Calu3 (cell line): ENCODE measurements at regions of chr6 and their contacts with region 1.

Region 1: DNA sequence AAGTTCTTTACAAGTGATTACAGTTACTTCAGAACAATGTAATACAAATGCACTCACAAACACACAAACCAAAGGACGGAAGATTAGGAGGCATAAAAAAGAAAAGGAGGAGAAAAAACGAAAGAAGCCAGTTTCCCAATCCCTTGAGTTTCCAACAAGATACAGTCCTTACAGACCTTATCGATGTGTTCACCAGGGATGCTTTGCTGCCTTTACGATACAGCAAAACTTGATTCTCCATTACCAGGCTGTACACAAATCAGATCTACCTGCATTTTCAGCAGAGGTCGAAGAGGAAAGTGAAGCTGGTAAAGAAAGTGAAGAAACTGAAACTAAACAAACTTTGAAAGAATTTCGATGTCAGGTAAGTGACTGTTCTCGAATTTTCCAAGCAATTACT is 62.6 kb upstream of the SMIM8 start:
- DNase-seq: no peak
- H3K4me3 Mint-ChIP-seq: no peak overlapping the region
- H3K27ac Mint-ChIP-seq: peak overlapping the region; percentile 25
- H3K4me1 Mint-ChIP-seq: no peaks in the 10 kb centered on the region
- H3K27me3 Mint-ChIP-seq: no peaks in the 10 kb centered on the region
- CTCF ChIP-seq: no peak

Region 2: DNA sequence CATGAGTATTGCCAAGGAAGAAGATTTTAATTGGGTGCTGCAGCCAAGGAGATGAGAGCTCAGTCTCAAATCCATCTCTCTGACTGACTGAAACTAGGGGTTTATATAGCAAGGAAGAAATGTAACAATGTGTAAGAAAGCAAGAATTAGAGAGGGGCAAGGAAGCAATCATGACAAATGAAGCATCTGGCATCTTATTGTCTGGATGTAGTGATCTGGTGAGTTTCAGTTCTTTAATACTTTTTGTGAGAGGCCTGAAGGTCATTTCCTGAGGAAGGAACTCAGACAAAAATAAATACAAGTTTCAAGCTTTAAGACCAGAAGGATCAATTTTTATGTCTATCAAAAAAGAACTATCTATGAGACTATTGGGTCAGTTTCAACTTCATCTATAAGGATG is 258.3 kb before region 1 on chr6:
- CTCF ChIA-PET with region 1: no interaction called
- intact Hi-C with region 1: no loop called
- DNase-seq: no peak
- H3K4me3 Mint-ChIP-seq: no peak overlapping the region
- H3K27ac Mint-ChIP-seq: no peak overlapping the region
- H3K4me1 Mint-ChIP-seq: no peaks in the 10 kb centered on the region
- H3K27me3 Mint-ChIP-seq: no peaks in the 10 kb centered on the region
- CTCF ChIP-seq: no peak

Region 3: GRCh38 chr6:87197547-87197946 is 62.2 kb before region 1 on chr6:
- CTCF ChIA-PET with region 1: no interaction called
- intact Hi-C with region 1: no loop called
- DNase-seq: no peak
- H3K4me3 Mint-ChIP-seq: no peak overlapping the region
- H3K27ac Mint-ChIP-seq: no peak overlapping the region
- H3K4me1 Mint-ChIP-seq: no peaks in the 10 kb centered on the region
- H3K27me3 Mint-ChIP-seq: no peaks in the 10 kb centered on the region
- CTCF ChIP-seq: no peak

Region 4: GRCh38 chr6:87291883-87292282 is 32.1 kb after region 1 on chr6:
- CTCF ChIA-PET with region 1: no interaction called
- intact Hi-C with region 1: loop called (anchors 1 kb)
- DNase-seq: no peak
- H3K4me3 Mint-ChIP-seq: no peak overlapping the region
- H3K27ac Mint-ChIP-seq: no peak overlapping the region
- H3K4me1 Mint-ChIP-seq: peaks cover 6% of the 10 kb centered on the region
- H3K27me3 Mint-ChIP-seq: peaks cover 16% of the 10 kb centered on the region
- CTCF ChIP-seq: no peak

Region 5: DNA sequence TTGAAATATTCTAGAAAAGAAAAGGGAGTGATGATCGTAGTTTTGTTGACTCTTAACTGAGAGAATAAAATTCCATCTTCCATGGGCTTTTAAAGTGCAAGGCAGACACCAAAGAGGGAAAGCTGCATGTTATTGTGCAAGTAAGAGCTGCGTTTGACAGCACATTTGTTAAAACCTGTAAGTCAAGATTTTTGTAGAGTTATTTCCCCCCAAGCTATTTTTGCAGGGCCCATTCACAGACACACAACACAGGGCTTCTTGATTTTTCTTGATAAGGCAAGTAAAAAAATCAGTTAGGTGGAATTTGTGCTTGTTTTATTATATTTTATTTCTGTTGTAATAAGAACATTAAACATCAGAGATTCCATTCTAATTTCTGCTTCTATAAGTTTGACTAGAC is 161.8 kb after region 1 on chr6:
- CTCF ChIA-PET with region 1: no interaction called
- intact Hi-C with region 1: no loop called
- DNase-seq: no peak
- H3K4me3 Mint-ChIP-seq: no peak overlapping the region
- H3K27ac Mint-ChIP-seq: no peak overlapping the region
- H3K4me1 Mint-ChIP-seq: no peaks in the 10 kb centered on the region
- H3K27me3 Mint-ChIP-seq: no peaks in the 10 kb centered on the region
- CTCF ChIP-seq: no peak

Region 6: DNA sequence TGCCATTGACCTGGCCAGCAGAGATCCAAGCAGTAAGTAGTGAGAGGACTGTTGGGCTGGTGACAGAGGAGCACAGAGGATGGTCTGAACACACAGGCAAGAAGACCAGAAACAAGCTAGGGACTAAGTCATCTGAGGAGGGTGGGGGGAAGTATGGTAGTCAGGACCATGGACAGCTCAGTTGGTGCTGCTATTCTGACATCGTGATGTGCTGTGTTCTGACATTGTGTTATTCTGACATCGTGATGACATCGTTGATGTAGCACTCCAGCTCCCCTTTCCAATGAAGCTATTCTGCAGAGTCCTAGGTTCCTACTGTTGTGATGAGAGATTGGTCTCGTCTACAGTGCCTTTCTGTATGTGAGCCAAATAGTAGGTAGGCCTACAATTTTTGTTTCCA is 176.6 kb after region 1 on chr6:
- CTCF ChIA-PET with region 1: no interaction called
- intact Hi-C with region 1: no loop called
- DNase-seq: peak; percentile 48
- H3K4me3 Mint-ChIP-seq: no peak overlapping the region
- H3K27ac Mint-ChIP-seq: no peak overlapping the region
- H3K4me1 Mint-ChIP-seq: no peaks in the 10 kb centered on the region
- H3K27me3 Mint-ChIP-seq: no peaks in the 10 kb centered on the region
- CTCF ChIP-seq: no peak